ENCODE measurements at regions of chr5 and their contacts with region 1.

Region 1: GRCh38 chr5:112146323-112147226 is 272.5 kb downstream of the EPB41L4A start:
- DNase-seq: peak in 1 of 3 donors; percentile 59
- ATAC-seq: peak; percentile 96 to 99 (median 98)
- H3K4me3 ChIP-seq: no peak overlapping the region
- H3K27ac ChIP-seq: no peak overlapping the region
- H3K4me1 ChIP-seq: peaks cover 0 to 9% (median 0%) of the 10 kb centered on the region in 4 donors
- H3K27me3 ChIP-seq: no peaks in the 10 kb centered on the region
- CTCF ChIP-seq: peak; percentile 84 to 96 (median 86)
- POLR2A ChIP-seq: no peak

Region 2: DNA sequence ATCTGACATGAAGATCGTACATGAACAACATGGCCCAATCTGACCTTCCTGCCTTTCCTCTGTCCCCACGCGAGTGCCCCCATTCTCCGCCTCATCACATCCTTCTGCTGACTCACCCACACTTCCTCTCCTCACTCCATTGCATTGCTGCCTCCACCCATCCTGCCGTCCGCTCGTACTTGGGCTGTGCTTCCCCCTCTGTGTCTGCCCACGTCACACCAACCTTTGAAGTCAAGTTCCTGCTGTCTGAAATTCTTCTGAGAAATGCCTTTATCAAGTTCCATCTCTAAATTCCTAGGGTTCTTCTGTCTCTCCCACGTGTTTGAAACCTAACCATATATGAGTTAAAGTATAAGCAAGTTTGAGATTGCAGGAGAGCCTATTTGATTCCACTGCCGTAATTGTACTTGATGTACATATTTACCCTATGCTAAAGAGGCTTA is 616.3 kb before region 1 on chr5:
- intact Hi-C with region 1: loop called in 1 of 2 experiments (anchors 10 kb)
- DNase-seq: peak; percentile 62 to 71 (median 64)
- ATAC-seq: peak; percentile 82 to 96 (median 91)
- H3K4me3 ChIP-seq: no peak overlapping the region
- H3K27ac ChIP-seq: no peak overlapping the region
- H3K4me1 ChIP-seq: no peaks in the 10 kb centered on the region
- H3K27me3 ChIP-seq: no peaks in the 10 kb centered on the region
- CTCF ChIP-seq: no peak
- POLR2A ChIP-seq: no peak

Region 3: GRCh38 chr5:111550279-111551020 is 596.1 kb before region 1 on chr5:
- intact Hi-C with region 1: loop called in 1 of 2 experiments (anchors 10 kb)
- DNase-seq: peak in 2 of 3 donors; percentile 38 to 71
- ATAC-seq: peak; percentile 90 to 94 (median 92)
- H3K4me3 ChIP-seq: no peak overlapping the region
- H3K27ac ChIP-seq: no peak overlapping the region
- H3K4me1 ChIP-seq: peaks cover 0 to 16% (median 0%) of the 10 kb centered on the region in 4 donors
- H3K27me3 ChIP-seq: no peaks in the 10 kb centered on the region
- CTCF ChIP-seq: peak; percentile 57 to 68 (median 64)
- POLR2A ChIP-seq: no peak

Region 4: DNA sequence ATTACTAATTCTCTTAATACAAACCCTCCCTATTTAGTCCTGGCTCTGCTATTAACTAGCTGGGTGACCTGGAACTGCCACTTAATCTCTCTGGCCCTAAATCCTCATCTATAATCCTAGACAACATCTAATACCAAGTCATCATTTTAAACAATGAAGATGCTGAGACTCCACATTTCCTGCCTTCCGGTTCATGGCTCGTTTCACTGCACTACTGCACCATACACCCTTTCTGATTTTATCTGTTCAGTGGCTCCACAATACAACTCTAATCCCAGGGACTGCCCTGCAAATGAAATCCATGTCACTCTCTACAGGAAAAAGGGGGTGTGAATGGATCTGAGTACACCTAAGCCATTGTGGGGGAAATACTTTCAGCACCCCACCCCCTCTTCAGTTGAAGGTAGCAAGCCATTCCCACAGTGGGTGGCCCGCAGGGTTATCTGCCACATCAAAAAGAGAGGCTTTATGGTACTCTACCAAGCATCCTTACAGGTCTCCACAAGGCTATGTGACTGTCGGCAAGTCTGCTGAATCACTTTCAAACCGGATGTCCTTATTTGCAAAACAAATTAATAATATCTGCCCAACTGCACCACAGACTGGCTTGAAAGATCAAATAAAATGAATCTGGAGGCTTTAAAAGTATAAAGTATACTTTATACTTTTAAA is 183.0 kb after region 1 on chr5:
- intact Hi-C with region 1: no loop called
- DNase-seq: no peak
- ATAC-seq: peak in 2 of 4 donors; percentile 12 to 25
- H3K4me3 ChIP-seq: no peak overlapping the region
- H3K27ac ChIP-seq: no peak overlapping the region
- H3K4me1 ChIP-seq: no peaks in the 10 kb centered on the region
- H3K27me3 ChIP-seq: no peaks in the 10 kb centered on the region
- CTCF ChIP-seq: no peak
- POLR2A ChIP-seq: no peak